ENCODE measurements at regions of chr7 and their contacts with region 1.

Region 1: DNA sequence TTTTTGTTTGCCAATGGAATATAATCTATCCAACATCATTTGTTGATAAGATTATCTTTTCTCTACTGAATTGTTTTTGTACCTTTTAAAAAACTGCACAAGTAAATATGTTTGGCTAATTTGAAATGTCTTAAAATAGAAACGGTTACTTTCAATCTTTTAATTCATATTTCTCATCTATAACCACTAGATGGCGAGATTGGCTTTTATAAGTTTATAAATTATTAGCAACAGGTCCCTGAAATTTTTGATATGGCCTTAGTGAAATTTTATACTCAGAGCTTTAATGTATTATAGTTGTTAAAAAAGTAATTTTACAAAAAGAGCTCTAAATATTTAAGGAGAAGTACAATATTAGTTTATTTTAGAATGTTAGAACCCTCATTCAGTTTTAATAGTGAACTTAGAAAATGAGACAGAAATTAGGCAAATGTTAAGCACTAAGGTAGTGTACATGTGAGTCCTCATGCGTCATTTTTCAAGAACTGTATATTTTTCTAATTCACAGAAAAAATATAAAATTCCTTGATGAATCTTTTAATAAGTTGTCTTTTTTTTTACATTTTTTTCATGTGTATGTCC is 592.5 kb downstream of the ARL4A start:
- DNase-seq: no peak
- ATAC-seq: no peak
- H3K4me3 Mint-ChIP-seq: no peak overlapping the region
- H3K27ac Mint-ChIP-seq: no peak overlapping the region
- H3K4me1 Mint-ChIP-seq: no peaks in the 10 kb centered on the region
- H3K27me3 Mint-ChIP-seq: peaks cover 4% of the 10 kb centered on the region

Region 2: GRCh38 chr7:13007331-13007730 is 272.6 kb before region 1 on chr7:
- CTCF ChIA-PET with region 1: no interaction called
- POLR2A ChIA-PET with region 1: no interaction called
- intact Hi-C with region 1: no loop called
- DNase-seq: no peak
- ATAC-seq: no peak
- H3K4me3 Mint-ChIP-seq: no peak overlapping the region
- H3K27ac Mint-ChIP-seq: no peak overlapping the region
- H3K4me1 Mint-ChIP-seq: no peaks in the 10 kb centered on the region
- H3K27me3 Mint-ChIP-seq: peaks cover 8% of the 10 kb centered on the region

Region 3: GRCh38 chr7:13327669-13328068 is 47.7 kb after region 1 on chr7:
- CTCF ChIA-PET with region 1: no interaction called
- POLR2A ChIA-PET with region 1: no interaction called
- intact Hi-C with region 1: no loop called
- DNase-seq: no peak
- ATAC-seq: no peak
- H3K4me3 Mint-ChIP-seq: no peak overlapping the region
- H3K27ac Mint-ChIP-seq: no peak overlapping the region
- H3K4me1 Mint-ChIP-seq: no peaks in the 10 kb centered on the region
- H3K27me3 Mint-ChIP-seq: no peaks in the 10 kb centered on the region

Region 4: DNA sequence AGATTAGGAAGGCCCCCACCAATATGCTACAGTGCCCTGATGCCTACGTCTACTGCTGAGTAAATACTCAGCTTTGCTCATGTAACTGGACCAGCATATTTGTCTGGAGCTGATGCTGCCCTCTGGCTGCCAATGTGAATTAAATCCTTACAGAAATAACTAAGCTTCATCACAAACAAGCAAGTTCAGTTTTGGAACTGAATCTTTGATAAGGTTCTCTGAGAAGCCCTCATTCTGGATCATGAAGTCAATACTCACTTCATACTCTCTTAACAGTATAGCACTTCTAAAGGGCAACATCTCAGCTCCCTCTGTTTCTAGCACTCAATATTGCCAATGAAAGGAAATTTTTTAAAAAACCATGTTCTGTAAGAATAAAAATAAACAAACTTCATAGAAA is 462.9 kb after region 1 on chr7:
- CTCF ChIA-PET with region 1: interaction called, 3 read pairs
- POLR2A ChIA-PET with region 1: no interaction called
- intact Hi-C with region 1: loop called in 1 of 2 experiments (anchors 1 kb)
- DNase-seq: peak; percentile 24
- ATAC-seq: no peak
- H3K4me3 Mint-ChIP-seq: no peak overlapping the region
- H3K27ac Mint-ChIP-seq: no peak overlapping the region
- H3K4me1 Mint-ChIP-seq: no peaks in the 10 kb centered on the region
- H3K27me3 Mint-ChIP-seq: no peaks in the 10 kb centered on the region

Region 5: GRCh38 chr7:14457568-14458453 is 1177.9 kb after region 1 on chr7:
- CTCF ChIA-PET with region 1: interaction called, 10 read pairs
- POLR2A ChIA-PET with region 1: no interaction called
- intact Hi-C with region 1: loop called (anchors 1 kb)
- DNase-seq: peak; percentile 61
- ATAC-seq: no peak
- H3K4me3 Mint-ChIP-seq: no peak overlapping the region
- H3K27ac Mint-ChIP-seq: no peak overlapping the region
- H3K4me1 Mint-ChIP-seq: no peaks in the 10 kb centered on the region
- H3K27me3 Mint-ChIP-seq: no peaks in the 10 kb centered on the region

Region 6: DNA sequence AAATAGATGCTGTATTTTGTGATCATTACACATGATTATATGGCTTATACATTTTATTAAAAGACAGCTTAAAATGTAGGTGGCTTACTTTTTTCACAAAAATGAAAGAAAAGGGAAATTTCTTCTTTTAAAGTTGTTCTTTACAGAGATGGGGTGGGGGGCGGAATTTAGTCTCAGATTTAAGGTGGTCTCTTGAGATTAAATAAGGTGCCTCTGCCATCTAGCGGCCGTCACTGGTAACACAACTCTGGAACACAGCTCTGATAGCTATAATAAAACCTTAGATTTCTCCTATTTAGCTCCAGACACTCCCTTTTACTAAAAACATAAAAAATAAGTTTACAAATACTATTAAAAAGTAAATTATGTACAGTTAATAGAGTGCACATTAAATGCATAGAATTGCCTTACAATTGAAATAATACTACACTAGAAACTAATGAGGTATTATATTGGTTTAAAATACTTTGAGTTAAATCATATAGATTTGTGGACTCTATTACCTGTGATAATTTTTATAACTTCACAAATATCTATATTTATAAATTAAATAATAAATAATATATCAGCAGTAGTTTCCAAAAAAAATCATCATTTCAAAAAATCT is 1411.8 kb after region 1 on chr7:
- CTCF ChIA-PET with region 1: interaction called, 30 read pairs
- POLR2A ChIA-PET with region 1: no interaction called
- intact Hi-C with region 1: loop called (anchors 1 to 2 kb)
- DNase-seq: peak; percentile 62
- ATAC-seq: no peak
- H3K4me3 Mint-ChIP-seq: no peak overlapping the region
- H3K27ac Mint-ChIP-seq: no peak overlapping the region
- H3K4me1 Mint-ChIP-seq: no peaks in the 10 kb centered on the region
- H3K27me3 Mint-ChIP-seq: no peaks in the 10 kb centered on the region

Region 7: GRCh38 chr7:15015545-15016326 is 1735.8 kb after region 1 on chr7:
- CTCF ChIA-PET with region 1: no interaction called
- POLR2A ChIA-PET with region 1: no interaction called
- intact Hi-C with region 1: loop called in 1 of 2 experiments (anchors 10 kb)
- DNase-seq: peak; percentile 10
- ATAC-seq: peak; percentile 79
- H3K4me3 Mint-ChIP-seq: no peak overlapping the region
- H3K27ac Mint-ChIP-seq: no peak overlapping the region
- H3K4me1 Mint-ChIP-seq: no peaks in the 10 kb centered on the region
- H3K27me3 Mint-ChIP-seq: no peaks in the 10 kb centered on the region